Activated B cell treated with CpG ODN at 0.5 μM for 24 hours (primary cell): ENCODE measurements at regions of chr10 and their contacts with region 1.

Region 1: GRCh38 chr10:30591249-30591670 is 38.3 kb downstream of the LYZL2 start:
- DNase-seq: no peak
- ATAC-seq: peak; percentile 23
- H3K4me3 Mint-ChIP-seq: no peak overlapping the region
- H3K27ac Mint-ChIP-seq: no peak overlapping the region
- H3K4me1 Mint-ChIP-seq: peaks cover 37% of the 10 kb centered on the region
- H3K27me3 Mint-ChIP-seq: peaks cover 9% of the 10 kb centered on the region
- CTCF ChIP-seq: peak; percentile 62

Region 2: DNA sequence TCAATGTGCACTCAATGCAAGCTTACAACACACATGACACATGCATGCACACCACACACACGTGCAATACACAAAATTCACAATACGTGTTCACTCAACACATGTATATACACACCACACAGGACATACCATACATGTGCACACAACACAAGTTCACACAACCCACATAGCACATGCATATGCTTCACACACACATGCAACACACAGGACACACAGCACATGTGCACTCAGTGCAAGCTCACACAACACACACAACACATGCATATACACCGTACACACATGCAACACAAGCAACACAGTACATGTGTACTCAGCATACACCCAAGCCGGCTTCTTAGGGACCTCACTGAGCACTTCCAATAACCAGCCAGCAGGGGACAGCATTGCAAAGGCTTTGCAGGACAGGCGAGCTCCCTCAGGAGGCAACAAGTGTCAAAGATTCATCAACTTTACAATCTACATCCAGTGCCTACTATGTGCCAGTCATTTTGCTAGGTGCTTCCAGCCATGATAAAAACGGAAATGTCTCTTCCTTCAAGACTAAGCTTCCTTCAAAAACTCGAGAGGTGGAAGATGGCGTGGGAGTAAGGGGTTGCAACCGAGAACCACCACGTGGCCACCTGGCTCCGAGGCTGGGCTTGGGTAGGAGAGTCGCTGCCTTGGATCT is 593.0 kb before region 1 on chr10:
- CTCF ChIA-PET with region 1: interaction called, 11 read pairs
- POLR2A ChIA-PET with region 1: no interaction called
- intact Hi-C with region 1: no loop called
- DNase-seq: peak; percentile 32
- ATAC-seq: peak; percentile 75
- H3K4me3 Mint-ChIP-seq: no peak overlapping the region
- H3K27ac Mint-ChIP-seq: no peak overlapping the region
- H3K4me1 Mint-ChIP-seq: no peaks in the 10 kb centered on the region
- H3K27me3 Mint-ChIP-seq: peaks cover 31% of the 10 kb centered on the region
- CTCF ChIP-seq: peak; percentile 43

Region 3: DNA sequence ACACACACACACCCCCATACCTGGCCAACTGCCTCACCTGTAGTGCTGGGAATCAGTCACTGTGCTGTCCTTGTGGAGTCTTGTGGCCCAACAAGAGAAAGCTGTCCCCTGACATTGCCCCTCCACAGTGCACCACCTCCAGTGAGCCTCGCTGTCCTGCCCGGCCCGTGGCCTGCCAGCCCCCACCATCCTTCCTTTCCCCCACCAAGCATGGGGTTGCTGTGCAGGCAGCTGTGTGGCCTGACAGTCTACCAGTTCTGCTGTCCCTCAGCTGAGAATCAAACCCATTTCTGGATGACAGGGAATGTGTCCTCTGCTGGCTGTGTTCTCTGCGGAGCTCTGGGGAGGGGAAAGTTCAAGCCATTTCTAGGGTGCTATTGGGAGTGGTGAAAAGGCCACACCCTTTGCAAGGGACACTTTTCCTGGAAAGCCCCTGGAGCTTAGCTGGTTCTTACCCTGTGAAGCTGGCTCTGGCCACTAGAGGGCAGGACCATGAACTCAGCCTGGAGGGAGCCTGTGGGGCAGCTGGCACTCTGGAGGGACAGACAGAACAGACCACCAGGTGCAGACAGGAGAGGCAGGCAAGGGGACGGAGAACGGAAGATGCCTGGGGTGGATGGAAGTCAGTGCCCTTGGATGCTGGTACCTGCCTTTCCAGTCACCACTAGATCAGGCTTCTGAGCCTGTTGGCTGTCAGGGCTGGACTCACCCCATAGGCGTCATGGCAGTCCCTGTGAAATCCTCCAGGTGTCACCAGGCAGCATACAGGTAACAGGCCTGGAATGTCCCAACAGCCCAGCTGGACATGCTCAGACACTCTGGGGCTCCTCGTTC is 231.7 kb before region 1 on chr10:
- CTCF ChIA-PET with region 1: interaction called, 64 read pairs
- POLR2A ChIA-PET with region 1: interaction called, 5 read pairs
- intact Hi-C with region 1: loop called (anchors 1 kb)
- DNase-seq: peak; percentile 51
- ATAC-seq: peak; percentile 94
- H3K4me3 Mint-ChIP-seq: no peak overlapping the region
- H3K27ac Mint-ChIP-seq: no peak overlapping the region
- H3K4me1 Mint-ChIP-seq: peaks cover 5% of the 10 kb centered on the region
- H3K27me3 Mint-ChIP-seq: peaks cover 6% of the 10 kb centered on the region
- CTCF ChIP-seq: no peak

Region 4: GRCh38 chr10:30413996-30414576 is 177.2 kb before region 1 on chr10:
- CTCF ChIA-PET with region 1: interaction called, 13 read pairs
- POLR2A ChIA-PET with region 1: no interaction called
- intact Hi-C with region 1: loop called (anchors 1 kb)
- DNase-seq: no peak
- ATAC-seq: peak; percentile 67
- H3K4me3 Mint-ChIP-seq: no peak overlapping the region
- H3K27ac Mint-ChIP-seq: peak overlapping the region; percentile 73
- H3K4me1 Mint-ChIP-seq: peaks cover 45% of the 10 kb centered on the region
- H3K27me3 Mint-ChIP-seq: no peaks in the 10 kb centered on the region
- CTCF ChIP-seq: peak; percentile 70

Region 5: DNA sequence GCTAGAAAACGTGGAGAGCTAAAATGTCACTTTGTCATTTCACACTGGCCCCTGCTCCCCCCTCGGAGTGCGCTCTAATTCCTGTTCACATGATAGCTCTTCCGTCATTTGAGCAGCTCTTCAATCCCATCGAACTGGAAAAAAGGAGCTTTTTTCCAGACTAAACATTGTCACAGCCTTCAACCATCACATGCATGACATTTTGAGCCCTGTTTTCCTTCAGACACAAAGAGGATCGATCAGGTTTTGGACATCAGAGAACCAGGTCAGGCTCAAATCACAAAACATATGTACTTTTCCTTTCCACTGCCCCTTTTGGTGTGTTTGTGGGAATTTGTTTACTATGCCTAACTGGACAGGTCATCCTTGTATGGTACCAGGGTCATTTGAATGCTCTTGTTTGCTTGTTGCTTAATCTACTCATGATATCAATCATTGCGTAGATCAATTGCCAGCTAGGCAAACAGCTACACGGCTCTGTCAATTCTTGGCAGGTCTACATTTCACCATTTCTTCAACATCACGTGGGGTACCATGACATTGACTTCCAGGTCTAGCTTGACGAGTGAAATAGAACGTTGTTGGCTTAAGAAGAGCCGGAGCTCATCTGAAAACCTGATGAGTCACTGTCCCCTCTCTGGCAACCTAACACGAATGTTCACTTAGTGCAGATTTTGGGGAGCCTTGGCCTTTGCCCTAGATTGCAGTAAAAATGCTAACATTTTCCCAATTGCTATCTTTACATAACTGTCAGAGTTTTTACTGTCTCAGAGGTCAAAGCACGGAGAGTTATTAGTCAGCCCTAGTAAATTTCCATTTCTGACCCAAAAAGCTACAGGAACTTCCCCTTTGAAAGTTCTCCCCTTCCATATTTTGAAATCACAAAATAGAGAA is 49.0 kb before region 1 on chr10:
- CTCF ChIA-PET with region 1: interaction called, 22 read pairs
- POLR2A ChIA-PET with region 1: interaction called, 9 read pairs
- intact Hi-C with region 1: loop called (anchors 2 kb)
- DNase-seq: no peak
- ATAC-seq: peak; percentile 21
- H3K4me3 Mint-ChIP-seq: no peak overlapping the region
- H3K27ac Mint-ChIP-seq: peak overlapping the region; percentile 4
- H3K4me1 Mint-ChIP-seq: peaks cover 13% of the 10 kb centered on the region
- H3K27me3 Mint-ChIP-seq: no peaks in the 10 kb centered on the region
- CTCF ChIP-seq: no peak

Region 6: DNA sequence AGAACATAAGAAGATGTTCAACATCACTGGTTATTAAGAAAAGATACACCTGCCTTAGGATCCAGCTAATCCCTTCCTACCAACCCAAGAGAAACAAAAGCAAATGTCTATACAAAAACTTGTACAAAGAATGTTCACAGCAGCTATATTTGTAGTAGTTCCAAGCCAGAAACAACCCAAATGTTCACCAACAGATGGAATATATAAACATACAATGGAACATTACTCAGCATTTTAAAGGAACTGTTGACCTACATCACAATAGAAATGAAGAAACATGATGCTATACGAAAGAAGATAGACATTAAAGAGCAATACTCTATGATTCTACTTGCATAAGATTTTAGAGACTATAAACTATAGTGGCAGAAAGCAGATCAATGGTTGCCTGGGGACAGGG is 291.0 kb after region 1 on chr10:
- CTCF ChIA-PET with region 1: no interaction called
- POLR2A ChIA-PET with region 1: no interaction called
- intact Hi-C with region 1: no loop called
- DNase-seq: no peak
- ATAC-seq: no peak
- H3K4me3 Mint-ChIP-seq: no peak overlapping the region
- H3K27ac Mint-ChIP-seq: no peak overlapping the region
- H3K4me1 Mint-ChIP-seq: no peaks in the 10 kb centered on the region
- H3K27me3 Mint-ChIP-seq: no peaks in the 10 kb centered on the region
- CTCF ChIP-seq: no peak